ENCODE measurements at regions of chr7 and their contacts with region 1.

Region 1: GRCh38 chr7:125670926-125671572 is 741.4 kb upstream of the POT1 start:
- H3K4me3 Mint-ChIP-seq: no peak overlapping the region
- H3K27ac Mint-ChIP-seq: no peak overlapping the region
- H3K4me1 Mint-ChIP-seq: no peaks in the 10 kb centered on the region
- H3K27me3 Mint-ChIP-seq: no peaks in the 10 kb centered on the region

Region 2: GRCh38 chr7:125061776-125062397 is 609.2 kb before region 1 on chr7:
- intact Hi-C with region 1: loop called (anchors 2 kb)
- H3K4me3 Mint-ChIP-seq: no peak overlapping the region
- H3K27ac Mint-ChIP-seq: no peak overlapping the region
- H3K4me1 Mint-ChIP-seq: no peaks in the 10 kb centered on the region
- H3K27me3 Mint-ChIP-seq: no peaks in the 10 kb centered on the region

Measured in dendritic cell treated with granulocyte-macrophage colony-stimulating factor and Interleukin-4, amounts not matched to agents 40 ng/mL and 50 ng/mL, for 4 days (primary cell).